Activated B cell treated with CpG ODN at 0.5 μM for 24 hours (primary cell): ENCODE measurements at regions of chr13 and their contacts with region 1.

Region 1: GRCh38 chr13:42594970-42595571 is 21.1 kb downstream of the TNFSF11 start:
- DNase-seq: no peak
- ATAC-seq: peak; percentile 64
- H3K4me3 Mint-ChIP-seq: no peak overlapping the region
- H3K27ac Mint-ChIP-seq: no peak overlapping the region
- H3K4me1 Mint-ChIP-seq: no peaks in the 10 kb centered on the region
- H3K27me3 Mint-ChIP-seq: peaks cover 1% of the 10 kb centered on the region
- CTCF ChIP-seq: peak; percentile 84

Region 2: GRCh38 chr13:42548731-42549551 is 46.1 kb before region 1 on chr13:
- CTCF ChIA-PET with region 1: no interaction called
- POLR2A ChIA-PET with region 1: no interaction called
- intact Hi-C with region 1: loop called (anchors 5 kb)
- DNase-seq: peak; percentile 22
- ATAC-seq: peak; percentile 85
- H3K4me3 Mint-ChIP-seq: peak overlapping the region; percentile 26
- H3K27ac Mint-ChIP-seq: peak overlapping the region; percentile 27
- H3K4me1 Mint-ChIP-seq: peaks cover 16% of the 10 kb centered on the region
- H3K27me3 Mint-ChIP-seq: no peaks in the 10 kb centered on the region
- CTCF ChIP-seq: no peak

Region 3: GRCh38 chr13:43132257-43132656 is 537.2 kb after region 1 on chr13:
- CTCF ChIA-PET with region 1: no interaction called
- POLR2A ChIA-PET with region 1: no interaction called
- intact Hi-C with region 1: loop called (anchors 5 kb)
- DNase-seq: no peak
- ATAC-seq: peak; percentile 45
- H3K4me3 Mint-ChIP-seq: no peak overlapping the region
- H3K27ac Mint-ChIP-seq: no peak overlapping the region
- H3K4me1 Mint-ChIP-seq: peaks cover 16% of the 10 kb centered on the region
- H3K27me3 Mint-ChIP-seq: peaks cover 33% of the 10 kb centered on the region
- CTCF ChIP-seq: no peak

Region 4: GRCh38 chr13:43792076-43792881 is 1197.2 kb after region 1 on chr13:
- CTCF ChIA-PET with region 1: no interaction called
- POLR2A ChIA-PET with region 1: no interaction called
- intact Hi-C with region 1: no loop called
- DNase-seq: no peak
- ATAC-seq: no peak
- H3K4me3 Mint-ChIP-seq: no peak overlapping the region
- H3K27ac Mint-ChIP-seq: no peak overlapping the region
- H3K4me1 Mint-ChIP-seq: peaks cover 8% of the 10 kb centered on the region
- H3K27me3 Mint-ChIP-seq: peaks cover 35% of the 10 kb centered on the region
- CTCF ChIP-seq: no peak